GM18951 (cell line): ENCODE measurements at regions of chr9 and their contacts with region 1.

Region 1: GRCh38 chr9:97602430-97602829 is 30.7 kb downstream of the TSTD2 start:
- POLR2A ChIP-seq: no peak

Region 2: GRCh38 chr9:97406620-97407177 is 195.7 kb before region 1 on chr9:
- in situ Hi-C with region 1: loop called (anchors 10 kb)
- POLR2A ChIP-seq: no peak

Region 3: GRCh38 chr9:98087420-98088354 is 485.3 kb after region 1 on chr9:
- in situ Hi-C with region 1: no loop called
- POLR2A ChIP-seq: no peak